Aorta (tissue), 5 donors: ENCODE measurements at regions of chr3 and their contacts with region 1.

Region 1: DNA sequence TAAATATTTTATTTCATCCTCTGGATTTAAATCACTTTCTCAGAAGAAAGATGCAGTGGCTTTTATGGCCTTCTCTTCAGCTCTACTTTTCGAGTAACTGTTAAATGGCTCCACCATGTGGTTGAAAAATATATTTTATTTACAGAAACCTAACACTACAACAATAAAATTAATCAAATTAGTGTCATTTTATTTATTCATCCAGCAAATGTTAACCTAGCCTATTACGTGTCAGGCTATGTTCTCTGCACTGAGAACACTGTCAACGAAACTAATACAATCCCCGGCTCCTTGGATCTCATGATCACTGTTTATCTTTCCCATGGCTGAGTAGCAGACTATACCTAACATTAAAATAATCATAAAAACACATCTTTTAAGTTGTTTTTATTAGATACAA is 148.0 kb upstream of the OSTN start:
- DNase-seq: no peak
- ATAC-seq: no peak
- H3K4me3 ChIP-seq: no peak overlapping the region
- H3K27ac ChIP-seq: no peak overlapping the region
- H3K4me1 ChIP-seq: no peaks in the 10 kb centered on the region
- H3K27me3 ChIP-seq: no peaks in the 10 kb centered on the region

Region 2: DNA sequence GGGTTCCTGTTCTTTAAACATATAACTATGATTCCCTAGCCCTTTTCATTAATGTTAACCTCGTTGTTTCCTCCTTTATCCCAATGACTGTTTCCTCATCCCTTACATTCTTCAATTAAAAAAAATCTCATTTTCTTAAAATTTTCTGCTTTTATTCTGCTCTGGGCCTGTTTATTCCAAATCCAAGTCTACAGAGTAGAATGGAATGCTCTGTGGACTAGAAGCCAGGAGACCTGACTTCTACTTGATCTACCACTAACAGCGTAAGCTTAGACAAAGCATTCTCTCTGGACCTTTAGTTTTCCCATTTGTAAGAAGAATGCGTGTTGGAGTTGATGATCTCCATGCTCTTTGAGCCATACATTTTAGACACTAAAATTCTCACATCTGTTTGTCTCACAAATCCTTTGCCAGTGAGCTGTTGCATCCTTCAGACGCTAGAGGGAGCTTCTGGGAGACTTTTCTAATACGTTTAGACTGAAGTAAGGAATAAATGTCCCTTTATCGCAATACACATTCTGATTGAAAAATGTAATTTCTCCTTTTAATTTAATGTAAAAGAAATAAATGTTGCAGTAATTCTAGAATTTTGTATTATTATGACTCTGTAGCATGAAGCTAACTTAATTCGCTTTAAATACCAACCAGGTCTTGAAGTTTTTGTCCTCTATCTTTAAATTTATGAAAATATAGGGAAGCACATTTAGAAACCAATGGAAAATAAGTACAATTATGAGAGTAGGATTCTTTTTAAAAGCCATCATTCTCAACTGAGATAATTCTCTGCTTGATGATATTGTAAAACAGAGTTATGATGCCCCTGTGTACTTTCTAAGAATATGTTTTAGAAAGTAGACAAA is 166.8 kb before region 1 on chr3:
- intact Hi-C with region 1: loop called (anchors 2 to 5 kb)
- DNase-seq: no peak
- ATAC-seq: no peak
- H3K4me3 ChIP-seq: no peak overlapping the region
- H3K27ac ChIP-seq: no peak overlapping the region
- H3K4me1 ChIP-seq: no peaks in the 10 kb centered on the region
- H3K27me3 ChIP-seq: no peaks in the 10 kb centered on the region